Endothelial cell of umbilical vein (primary cell): ENCODE measurements at regions of chr2 and their contacts with region 1.

Region 1: GRCh38 chr2:224778474-224778877 is 62.3 kb upstream of the CCDC195 start:
- DNase-seq: peak; percentile 83
- H3K4me3 ChIP-seq: no peak overlapping the region
- H3K27ac ChIP-seq: no peak overlapping the region
- H3K4me1 ChIP-seq: no peaks in the 10 kb centered on the region
- H3K27me3 ChIP-seq: no peaks in the 10 kb centered on the region
- CTCF ChIP-seq: peak; percentile 55 to 61
- POLR2A ChIP-seq: no peak

Region 2: DNA sequence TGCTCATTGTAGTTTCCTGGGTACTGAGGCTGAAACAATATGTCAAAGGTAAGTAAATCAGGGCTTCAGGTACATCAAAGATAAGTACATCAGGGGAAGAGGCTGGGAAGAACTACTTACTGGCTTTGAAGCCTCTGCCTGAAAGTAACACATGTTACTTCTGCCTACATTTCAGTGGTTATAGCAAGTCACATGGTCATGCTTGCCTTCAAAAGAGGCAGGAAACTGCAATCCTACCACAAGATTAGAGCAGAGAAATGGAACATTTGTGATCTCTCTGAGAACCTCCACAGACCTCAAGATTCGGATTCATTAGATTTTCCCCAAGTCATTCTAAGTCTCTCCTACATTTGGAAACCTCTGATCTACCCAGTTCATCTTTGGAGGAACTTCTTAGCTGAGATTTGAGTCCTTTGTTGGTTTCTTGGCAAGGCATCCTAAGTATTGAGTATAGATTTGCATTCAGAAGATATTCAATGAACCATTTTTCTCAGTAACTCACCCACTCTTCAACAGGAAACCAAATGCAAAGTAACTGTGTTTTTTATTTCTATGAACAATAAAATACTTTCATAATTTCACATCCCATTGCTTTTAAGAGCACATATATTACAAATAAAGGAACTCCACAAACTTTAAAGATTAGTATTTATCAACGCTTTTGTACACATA is 13.8 kb before region 1 on chr2:
- CTCF ChIA-PET with region 1: no interaction called
- POLR2A ChIA-PET with region 1: no interaction called
- dilution Hi-C with region 1: no loop called
- intact Hi-C with region 1: no loop called
- DNase-seq: no peak
- H3K4me3 ChIP-seq: no peak overlapping the region
- H3K27ac ChIP-seq: no peak overlapping the region
- H3K4me1 ChIP-seq: no peaks in the 10 kb centered on the region
- H3K27me3 ChIP-seq: no peaks in the 10 kb centered on the region
- CTCF ChIP-seq: no peak
- POLR2A ChIP-seq: no peak

Region 3: GRCh38 chr2:225008935-225009334 is 230.5 kb after region 1 on chr2:
- CTCF ChIA-PET with region 1: interaction called, 5 read pairs
- POLR2A ChIA-PET with region 1: no interaction called
- dilution Hi-C with region 1: no loop called
- intact Hi-C with region 1: loop called (anchors 1 kb)
- DNase-seq: peak; percentile 39
- H3K4me3 ChIP-seq: no peak overlapping the region
- H3K27ac ChIP-seq: no peak overlapping the region
- H3K4me1 ChIP-seq: peaks cover 13% of the 10 kb centered on the region
- H3K27me3 ChIP-seq: no peaks in the 10 kb centered on the region
- CTCF ChIP-seq: peak; percentile 37 to 63
- POLR2A ChIP-seq: no peak